ENCODE measurements at regions of chr1 and their contacts with region 1.

Region 1: DNA sequence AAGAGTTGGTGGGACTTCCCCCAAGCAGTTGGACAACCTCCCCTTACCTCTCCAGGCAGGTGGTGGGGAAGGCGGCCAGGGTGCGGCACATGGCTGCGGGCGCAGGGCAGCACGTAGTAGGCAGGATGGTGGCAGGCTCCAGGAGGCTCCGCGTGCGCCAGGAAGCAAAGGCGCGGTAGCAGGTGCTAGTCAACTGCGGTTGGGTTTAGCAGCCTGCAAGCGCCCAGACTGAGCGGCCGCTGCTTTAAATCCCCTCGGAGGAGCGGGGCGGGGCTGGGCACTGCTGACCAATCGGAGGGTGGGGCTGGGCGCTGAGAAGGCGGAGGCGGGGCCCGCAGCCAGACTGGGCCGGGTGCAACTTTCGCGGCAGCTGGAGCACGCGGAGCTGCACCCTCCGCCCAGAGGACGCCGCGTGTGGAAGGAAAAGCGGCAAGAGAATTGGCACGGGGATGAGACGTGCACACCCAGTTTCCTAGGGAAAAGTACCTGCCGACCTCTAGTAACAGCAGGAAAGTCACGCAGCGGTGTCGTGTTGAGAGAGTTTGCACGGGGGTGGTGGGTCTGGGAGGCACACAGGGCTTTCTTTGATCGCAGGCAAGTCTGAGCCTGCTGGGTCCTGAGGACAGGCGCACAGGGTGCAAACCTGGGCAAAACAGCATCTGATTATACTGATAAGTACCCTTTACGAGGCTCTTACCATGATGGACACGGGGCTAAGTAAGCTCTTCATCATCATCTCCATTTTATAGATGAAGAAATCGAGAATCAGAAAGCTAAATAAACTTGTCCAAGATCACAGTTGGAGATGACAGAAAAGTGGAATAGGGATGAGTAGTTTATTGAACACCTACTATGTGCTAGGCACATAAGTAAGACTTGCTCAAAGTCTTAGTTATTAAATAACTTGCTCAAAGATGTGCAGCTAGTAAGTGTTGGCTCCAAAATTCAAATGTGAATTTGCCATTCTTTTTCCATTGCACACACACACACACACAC is at the start of gene RGS16:
- DNase-seq: peak; percentile 97
- H3K4me3 Mint-ChIP-seq: no peak within 1 kb of the TSS
- H3K27ac Mint-ChIP-seq: no peak within 1 kb of the TSS
- H3K4me1 Mint-ChIP-seq: peaks cover 45% of the 10 kb centered on the region
- H3K27me3 Mint-ChIP-seq: no peaks in the 10 kb centered on the region
- total RNA-seq, gene RGS16: 35.3 to 37.3 TPM

Region 2: DNA sequence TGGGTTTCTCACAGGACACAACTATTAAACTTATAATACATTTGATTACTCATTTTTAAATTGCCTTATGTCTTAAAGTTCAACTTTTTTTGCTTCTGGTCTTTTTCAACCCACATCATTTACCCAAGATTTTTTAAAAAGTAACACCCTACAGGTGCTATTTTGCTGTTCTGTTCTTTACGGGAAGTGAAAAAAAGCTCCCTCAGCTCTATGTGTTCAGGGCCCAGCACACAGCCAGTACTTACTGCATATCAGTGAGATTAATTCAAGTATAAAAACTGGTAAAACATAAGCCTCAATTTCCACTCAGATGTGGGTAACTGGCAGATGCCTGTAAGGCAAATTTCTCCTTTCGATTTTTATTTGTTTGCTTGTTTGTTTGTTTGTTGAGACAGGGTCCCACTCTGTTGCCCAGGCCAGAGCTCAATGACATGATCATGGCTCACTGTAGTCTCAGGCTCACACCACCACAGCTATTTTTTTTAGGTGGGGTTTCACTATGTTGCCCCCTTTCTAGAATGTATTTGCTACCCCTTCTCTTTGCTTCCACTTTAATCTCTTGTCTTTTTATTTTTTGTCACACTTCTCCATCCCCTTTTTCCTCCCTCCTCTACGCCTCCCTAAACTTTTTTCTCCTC is 35.7 kb before region 1 on chr1:
- CTCF ChIA-PET with region 1: no interaction called
- intact Hi-C with region 1: no loop called
- DNase-seq: no peak
- H3K4me3 Mint-ChIP-seq: no peak overlapping the region
- H3K27ac Mint-ChIP-seq: no peak overlapping the region
- H3K4me1 Mint-ChIP-seq: no peaks in the 10 kb centered on the region
- H3K27me3 Mint-ChIP-seq: no peaks in the 10 kb centered on the region

Region 3: GRCh38 chr1:182614796-182615454 is 10.5 kb after region 1 on chr1:
- CTCF ChIA-PET with region 1: interaction called, 40 read pairs
- intact Hi-C with region 1: loop called (anchors 1 kb)
- DNase-seq: peak; percentile 72
- H3K4me3 Mint-ChIP-seq: peak overlapping the region; percentile 73
- H3K27ac Mint-ChIP-seq: peak overlapping the region; percentile 84
- H3K4me1 Mint-ChIP-seq: peaks cover 56% of the 10 kb centered on the region
- H3K27me3 Mint-ChIP-seq: peaks cover 5% of the 10 kb centered on the region

Region 4: GRCh38 chr1:182662121-182662890 is 57.8 kb after region 1 on chr1:
- CTCF ChIA-PET with region 1: interaction called, 5 read pairs
- intact Hi-C with region 1: loop called (anchors 1 kb)
- DNase-seq: peak; percentile 21
- H3K4me3 Mint-ChIP-seq: no peak overlapping the region
- H3K27ac Mint-ChIP-seq: no peak overlapping the region
- H3K4me1 Mint-ChIP-seq: no peaks in the 10 kb centered on the region
- H3K27me3 Mint-ChIP-seq: no peaks in the 10 kb centered on the region

Region 5: GRCh38 chr1:182716740-182717720 is 112.6 kb after region 1 on chr1:
- CTCF ChIA-PET with region 1: interaction called, 4 read pairs
- intact Hi-C with region 1: loop called (anchors 2 kb)
- DNase-seq: no peak
- H3K4me3 Mint-ChIP-seq: no peak overlapping the region
- H3K27ac Mint-ChIP-seq: no peak overlapping the region
- H3K4me1 Mint-ChIP-seq: peaks cover 40% of the 10 kb centered on the region
- H3K27me3 Mint-ChIP-seq: no peaks in the 10 kb centered on the region

Region 6: GRCh38 chr1:182789138-182790076 is 184.9 kb after region 1 on chr1 and contains the start of gene NPL:
- CTCF ChIA-PET with region 1: interaction called, 797 read pairs
- intact Hi-C with region 1: no loop called
- DNase-seq: peak; percentile 85
- H3K4me3 Mint-ChIP-seq: peak within 1 kb of the TSS; percentile 81
- H3K27ac Mint-ChIP-seq: peak within 1 kb of the TSS; percentile 22
- H3K4me1 Mint-ChIP-seq: peaks cover 13% of the 10 kb centered on the region
- H3K27me3 Mint-ChIP-seq: no peaks in the 10 kb centered on the region
- total RNA-seq, gene NPL: 4.6 to 5.9 TPM

Measured in activated naive CD4-positive, alpha-beta T cell treated with anti-CD3 and anti-CD28 coated beads for 36 hours (primary cell).